Motor neuron (in vitro differentiated cells): ENCODE measurements at regions of chr3 and their contacts with region 1.

Region 1: GRCh38 chr3:43769471-43770425 is 79.0 kb downstream of the ABHD5 start:
- ATAC-seq: peak; percentile 83 to 99 (median 86)
- H3K4me3 ChIP-seq: peak overlapping the region in 1 of 5 donors; percentile 10
- H3K27ac ChIP-seq: peak overlapping the region in 1 of 2 donors; percentile 59
- H3K4me1 ChIP-seq: peaks cover 25 to 39% of the 10 kb centered on the region in 2 donors

Region 2: GRCh38 chr3:44000586-44000985 is 230.8 kb after region 1 on chr3:
- in situ Hi-C with region 1: loop called in 1 of 9 experiments (anchors 25 kb)
- ATAC-seq: peak in 3 of 8 experiments; percentile 3 to 37 (median 25)
- H3K4me3 ChIP-seq: peak overlapping the region in 4 of 5 donors; percentile 1 to 85 (median 56)
- H3K27ac ChIP-seq: no peak overlapping the region
- H3K4me1 ChIP-seq: peaks cover 9 to 13% of the 10 kb centered on the region in 2 donors